ENCODE measurements at regions of chr5 and their contacts with region 1.

Region 1: DNA sequence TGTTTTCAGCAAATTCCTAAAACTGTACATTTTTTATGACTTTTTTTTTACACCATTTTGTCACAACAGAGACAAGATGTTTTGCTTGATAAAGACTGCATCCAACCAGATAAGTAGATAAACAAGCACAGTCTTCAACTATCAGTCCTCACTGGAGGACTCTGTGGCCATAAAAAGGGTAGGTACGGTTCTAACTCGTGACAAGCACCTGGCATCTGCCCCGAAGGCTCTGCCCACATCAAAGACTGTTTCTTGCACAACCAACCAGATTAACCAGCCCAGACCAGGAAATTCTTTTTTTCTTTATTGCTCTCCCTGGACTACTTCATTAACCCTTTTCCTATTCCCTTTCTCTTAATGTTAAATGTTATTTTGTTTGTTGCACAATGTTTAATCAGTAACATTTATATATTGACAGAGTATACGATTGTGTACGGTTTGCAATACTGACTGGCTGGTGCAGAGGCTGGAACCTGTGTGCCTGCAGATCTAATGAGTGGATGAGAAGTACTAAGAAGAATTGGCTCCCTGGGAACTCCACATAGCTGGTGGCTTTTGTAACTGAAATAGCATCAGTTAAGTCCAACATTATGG is 74.1 kb downstream of the SERINC5 start:
- DNase-seq: peak in 7 of 9 donors; percentile 57 to 70 (median 68)
- ATAC-seq: peak; percentile 79
- H3K4me3 ChIP-seq: no peak overlapping the region
- H3K4me3 Mint-ChIP-seq: peak overlapping the region; percentile 54 to 100 (median 78)
- H3K27ac ChIP-seq: peak overlapping the region; percentile 79
- H3K27ac Mint-ChIP-seq: peak overlapping the region; percentile 74 to 99 (median 97)
- H3K4me1 ChIP-seq: peaks cover 57 to 95% of the 10 kb centered on the region in 2 donors
- H3K4me1 Mint-ChIP-seq: peaks cover 65 to 96% (median 89%) of the 10 kb centered on the region in 7 donors
- H3K27me3 ChIP-seq: no peaks in the 10 kb centered on the region
- H3K27me3 Mint-ChIP-seq: no peaks in the 10 kb centered on the region

Region 2: GRCh38 chr5:79829260-79829659 is 352.5 kb before region 1 on chr5:
- CTCF ChIA-PET with region 1: no interaction called
- POLR2A ChIA-PET with region 1: no interaction called
- intact Hi-C with region 1: no loop called
- DNase-seq: no peak
- ATAC-seq: no peak
- H3K4me3 ChIP-seq: no peak overlapping the region
- H3K4me3 Mint-ChIP-seq: no peak overlapping the region
- H3K27ac ChIP-seq: no peak overlapping the region
- H3K27ac Mint-ChIP-seq: no peak overlapping the region
- H3K4me1 ChIP-seq: no peaks in the 10 kb centered on the region
- H3K4me1 Mint-ChIP-seq: peaks cover 0 to 7% (median 0%) of the 10 kb centered on the region in 7 donors
- H3K27me3 ChIP-seq: no peaks in the 10 kb centered on the region
- H3K27me3 Mint-ChIP-seq: peaks cover 0 to 18% (median 10%) of the 10 kb centered on the region in 5 donors

Region 3: DNA sequence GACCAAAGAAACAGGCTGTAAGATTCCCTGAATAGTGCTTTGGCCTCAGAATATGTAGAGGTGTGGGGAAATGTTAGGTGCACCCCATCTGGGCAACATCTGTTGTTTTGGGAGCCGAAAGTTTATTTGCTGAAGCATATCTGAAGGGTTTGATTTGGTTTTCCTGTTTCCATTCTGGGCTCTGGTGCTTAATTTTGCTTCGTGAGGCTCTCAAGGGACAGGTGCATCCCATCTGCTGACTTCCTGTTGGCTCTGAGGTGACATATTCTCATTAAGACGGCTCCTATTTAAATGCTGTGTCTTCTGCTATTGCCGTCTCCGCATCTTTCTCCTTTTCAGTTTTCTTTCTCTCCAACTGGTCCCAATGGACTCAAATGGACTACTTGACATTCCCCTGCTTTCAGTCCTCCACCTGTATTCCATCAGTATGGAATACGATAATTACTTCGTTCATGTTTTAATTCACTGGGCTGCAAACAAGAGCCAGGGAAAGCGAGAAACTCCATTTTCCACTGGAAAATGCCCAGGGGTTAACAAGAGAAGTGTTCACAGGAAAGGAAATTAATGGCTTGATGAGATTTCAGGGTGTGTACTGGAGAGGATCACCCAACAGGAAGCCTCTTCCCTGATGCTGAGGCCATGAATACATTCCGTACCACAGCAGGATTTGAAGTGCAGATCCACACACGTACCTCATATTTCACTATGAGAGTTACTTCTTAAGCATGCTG is 294.6 kb before region 1 on chr5:
- CTCF ChIA-PET with region 1: no interaction called
- POLR2A ChIA-PET with region 1: no interaction called
- intact Hi-C with region 1: no loop called
- DNase-seq: no peak
- ATAC-seq: no peak
- H3K4me3 ChIP-seq: no peak overlapping the region
- H3K4me3 Mint-ChIP-seq: no peak overlapping the region
- H3K27ac ChIP-seq: no peak overlapping the region
- H3K27ac Mint-ChIP-seq: no peak overlapping the region
- H3K4me1 ChIP-seq: no peaks in the 10 kb centered on the region
- H3K4me1 Mint-ChIP-seq: peaks cover 0 to 5% (median 0%) of the 10 kb centered on the region in 7 donors
- H3K27me3 ChIP-seq: no peaks in the 10 kb centered on the region
- H3K27me3 Mint-ChIP-seq: peaks cover 6 to 15% (median 10%) of the 10 kb centered on the region in 5 donors

Region 4: GRCh38 chr5:80026841-80027240 is 154.9 kb before region 1 on chr5:
- CTCF ChIA-PET with region 1: no interaction called
- POLR2A ChIA-PET with region 1: no interaction called
- intact Hi-C with region 1: no loop called
- DNase-seq: no peak
- ATAC-seq: no peak
- H3K4me3 ChIP-seq: no peak overlapping the region
- H3K4me3 Mint-ChIP-seq: no peak overlapping the region
- H3K27ac ChIP-seq: no peak overlapping the region
- H3K27ac Mint-ChIP-seq: peak overlapping the region in 1 of 9 donors; percentile 0
- H3K4me1 ChIP-seq: peaks cover 0 to 8% of the 10 kb centered on the region in 2 donors
- H3K4me1 Mint-ChIP-seq: peaks cover 0 to 14% (median 8%) of the 10 kb centered on the region in 7 donors
- H3K27me3 ChIP-seq: no peaks in the 10 kb centered on the region
- H3K27me3 Mint-ChIP-seq: peaks cover 0 to 31% (median 16%) of the 10 kb centered on the region in 5 donors

Region 5: DNA sequence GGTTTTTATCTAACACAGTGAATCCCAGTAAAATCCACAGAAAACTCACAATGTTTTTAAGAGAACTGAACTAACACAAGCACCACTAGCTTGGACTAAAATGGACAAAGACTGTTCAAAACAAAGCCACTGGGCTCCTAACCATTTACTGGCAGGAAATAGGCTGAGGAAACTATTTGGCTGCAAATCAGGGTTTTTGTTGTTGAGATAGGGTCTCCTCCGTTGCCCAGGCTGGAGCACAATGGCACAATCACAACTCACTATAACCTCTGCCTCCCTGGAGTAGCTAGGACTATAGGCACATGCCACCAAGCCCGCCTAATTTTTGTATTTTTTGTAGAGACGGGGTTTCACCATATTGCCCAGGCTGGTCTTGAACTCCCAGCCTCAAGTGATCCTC is 46.8 kb before region 1 on chr5:
- CTCF ChIA-PET with region 1: no interaction called
- POLR2A ChIA-PET with region 1: interaction called, 17 read pairs
- intact Hi-C with region 1: loop called (anchors 1 to 2 kb)
- DNase-seq: no peak
- ATAC-seq: no peak
- H3K4me3 ChIP-seq: no peak overlapping the region
- H3K4me3 Mint-ChIP-seq: peak overlapping the region in 8 of 10 donors; percentile 34 to 83 (median 76)
- H3K27ac ChIP-seq: peak overlapping the region; percentile 72
- H3K27ac Mint-ChIP-seq: peak overlapping the region; percentile 83 to 96 (median 92)
- H3K4me1 ChIP-seq: peaks cover 52 to 88% of the 10 kb centered on the region in 2 donors
- H3K4me1 Mint-ChIP-seq: peaks cover 60 to 97% (median 82%) of the 10 kb centered on the region in 7 donors
- H3K27me3 ChIP-seq: no peaks in the 10 kb centered on the region
- H3K27me3 Mint-ChIP-seq: no peaks in the 10 kb centered on the region

Region 6: GRCh38 chr5:80153586-80154126 is 28.1 kb before region 1 on chr5:
- CTCF ChIA-PET with region 1: no interaction called
- POLR2A ChIA-PET with region 1: interaction called, 12 read pairs
- intact Hi-C with region 1: loop called in 1 of 2 experiments (anchors 1 kb)
- DNase-seq: peak in 7 of 9 donors; percentile 57 to 78 (median 69)
- ATAC-seq: peak; percentile 60
- H3K4me3 ChIP-seq: no peak overlapping the region
- H3K4me3 Mint-ChIP-seq: peak overlapping the region; percentile 48 to 88 (median 80)
- H3K27ac ChIP-seq: peak overlapping the region; percentile 78
- H3K27ac Mint-ChIP-seq: peak overlapping the region; percentile 85 to 100 (median 99)
- H3K4me1 ChIP-seq: peaks cover 9 to 49% of the 10 kb centered on the region in 2 donors
- H3K4me1 Mint-ChIP-seq: peaks cover 17 to 89% (median 72%) of the 10 kb centered on the region in 7 donors
- H3K27me3 ChIP-seq: no peaks in the 10 kb centered on the region
- H3K27me3 Mint-ChIP-seq: no peaks in the 10 kb centered on the region

Region 7: DNA sequence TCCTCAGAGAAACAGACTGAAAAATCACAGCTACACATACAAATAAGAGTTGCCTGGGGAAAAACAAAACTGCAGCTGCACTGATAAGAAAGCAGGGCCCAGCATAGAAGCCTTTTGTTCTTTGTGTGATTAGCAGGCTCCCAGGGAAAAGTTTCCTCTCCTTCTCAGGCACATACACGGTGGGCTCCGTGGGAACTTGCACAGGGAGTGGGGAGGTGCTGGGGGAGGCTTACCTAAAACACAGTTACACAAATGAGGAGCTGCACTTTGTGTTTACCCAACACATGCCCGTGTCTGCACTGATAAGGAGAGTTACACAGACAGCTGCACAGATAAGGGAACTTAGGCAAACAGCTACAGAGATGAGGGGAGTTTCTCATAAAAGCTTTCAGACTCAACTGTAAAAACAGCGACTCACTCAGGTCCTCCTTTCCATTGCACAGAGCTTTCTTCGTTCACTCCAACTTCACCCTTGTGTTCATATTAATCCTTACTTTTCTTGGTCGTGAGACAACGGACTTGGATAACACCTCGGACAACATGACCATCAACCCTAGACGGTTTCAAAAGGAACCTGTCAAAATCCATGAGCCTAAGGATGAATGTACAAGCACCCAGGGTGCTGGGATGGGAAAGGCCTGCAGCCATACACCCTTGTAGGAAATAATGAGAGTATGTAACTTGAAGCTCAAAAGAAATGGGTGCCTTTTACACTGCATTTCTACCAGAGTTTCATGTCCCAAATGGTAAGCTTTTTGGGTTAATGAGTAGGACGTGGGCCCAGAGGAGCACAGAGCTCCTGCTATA is 23.3 kb after region 1 on chr5:
- CTCF ChIA-PET with region 1: interaction called, 10 read pairs
- POLR2A ChIA-PET with region 1: interaction called, 25 read pairs
- intact Hi-C with region 1: loop called in 1 of 2 experiments (anchors 1 kb)
- DNase-seq: peak in 6 of 9 donors; percentile 44 to 59 (median 49)
- ATAC-seq: peak; percentile 88
- H3K4me3 ChIP-seq: no peak overlapping the region
- H3K4me3 Mint-ChIP-seq: peak overlapping the region in 9 of 10 donors; percentile 58 to 82 (median 73)
- H3K27ac ChIP-seq: peak overlapping the region; percentile 54
- H3K27ac Mint-ChIP-seq: peak overlapping the region; percentile 46 to 99 (median 90)
- H3K4me1 ChIP-seq: peaks cover 10 to 74% of the 10 kb centered on the region in 2 donors
- H3K4me1 Mint-ChIP-seq: peaks cover 45 to 99% (median 91%) of the 10 kb centered on the region in 7 donors
- H3K27me3 ChIP-seq: no peaks in the 10 kb centered on the region
- H3K27me3 Mint-ChIP-seq: no peaks in the 10 kb centered on the region

Region 8: GRCh38 chr5:80268916-80269315 is 87.2 kb after region 1 on chr5:
- CTCF ChIA-PET with region 1: interaction called, 3 read pairs
- POLR2A ChIA-PET with region 1: interaction called, 4 read pairs
- intact Hi-C with region 1: loop called (anchors 1 to 2 kb)
- DNase-seq: peak in 3 of 9 donors; percentile 19 to 42 (median 32)
- ATAC-seq: peak; percentile 20
- H3K4me3 ChIP-seq: no peak overlapping the region
- H3K4me3 Mint-ChIP-seq: peak overlapping the region; percentile 56 to 83 (median 78)
- H3K27ac ChIP-seq: peak overlapping the region; percentile 58
- H3K27ac Mint-ChIP-seq: peak overlapping the region; percentile 93 to 100 (median 96)
- H3K4me1 ChIP-seq: peaks cover 6 to 37% of the 10 kb centered on the region in 2 donors
- H3K4me1 Mint-ChIP-seq: peaks cover 39 to 79% (median 62%) of the 10 kb centered on the region in 7 donors
- H3K27me3 ChIP-seq: no peaks in the 10 kb centered on the region
- H3K27me3 Mint-ChIP-seq: no peaks in the 10 kb centered on the region

Measured in naive thymus-derived CD4-positive, alpha-beta T cell (primary cell).